Caco-2 (cell line): ENCODE measurements at regions of chr2 and their contacts with region 1.

Region 1: DNA sequence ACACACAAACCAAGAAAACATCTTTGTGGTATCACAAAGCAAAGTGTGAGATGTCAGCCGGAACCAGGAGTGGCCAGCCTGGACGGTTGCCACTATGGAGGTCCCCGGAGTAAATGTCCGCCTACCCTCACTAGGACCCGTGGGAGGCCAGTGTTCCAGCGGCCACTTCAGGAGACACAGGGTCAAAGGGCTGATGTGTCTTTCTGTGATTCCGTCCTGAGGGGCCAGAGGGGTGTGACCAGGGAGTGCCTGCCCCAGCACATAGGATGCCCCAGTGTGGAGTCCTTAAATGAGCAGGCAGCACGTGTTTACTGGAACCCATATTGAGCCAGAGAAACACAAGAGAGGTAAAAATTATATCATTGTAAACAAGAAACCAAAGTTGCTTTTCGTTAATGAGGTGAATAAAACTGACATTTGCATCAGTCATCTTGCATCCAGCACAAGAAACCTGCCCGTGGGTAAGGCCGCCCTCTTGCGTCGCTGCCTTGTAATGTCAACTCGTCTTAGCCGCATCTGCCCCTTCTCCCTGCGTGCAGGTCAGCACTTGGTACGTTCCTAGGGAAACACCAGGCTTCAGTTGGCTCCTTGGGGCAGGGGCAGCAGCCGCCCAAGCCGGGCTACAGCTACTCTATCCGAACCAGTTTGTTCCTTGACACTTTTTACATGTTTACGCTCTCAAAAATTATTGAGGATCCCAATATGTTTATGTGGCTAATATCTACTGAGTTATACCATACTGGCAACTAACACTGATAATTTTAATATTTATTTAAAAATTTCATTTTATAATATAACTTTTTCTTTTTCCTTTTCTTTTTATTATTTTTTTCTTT is 46.7 kb upstream of the LAPTM4A start:
- DNase-seq: peak; percentile 89
- H3K4me3 ChIP-seq: no peak overlapping the region
- H3K4me3 Mint-ChIP-seq: no peak overlapping the region
- H3K27ac Mint-ChIP-seq: no peak overlapping the region
- H3K4me1 ChIP-seq: peaks cover 5% of the 10 kb centered on the region
- H3K4me1 Mint-ChIP-seq: peaks cover 8% of the 10 kb centered on the region
- H3K27me3 ChIP-seq: no peaks in the 10 kb centered on the region
- H3K27me3 Mint-ChIP-seq: no peaks in the 10 kb centered on the region
- CTCF ChIP-seq: peak; percentile 93

Region 2: DNA sequence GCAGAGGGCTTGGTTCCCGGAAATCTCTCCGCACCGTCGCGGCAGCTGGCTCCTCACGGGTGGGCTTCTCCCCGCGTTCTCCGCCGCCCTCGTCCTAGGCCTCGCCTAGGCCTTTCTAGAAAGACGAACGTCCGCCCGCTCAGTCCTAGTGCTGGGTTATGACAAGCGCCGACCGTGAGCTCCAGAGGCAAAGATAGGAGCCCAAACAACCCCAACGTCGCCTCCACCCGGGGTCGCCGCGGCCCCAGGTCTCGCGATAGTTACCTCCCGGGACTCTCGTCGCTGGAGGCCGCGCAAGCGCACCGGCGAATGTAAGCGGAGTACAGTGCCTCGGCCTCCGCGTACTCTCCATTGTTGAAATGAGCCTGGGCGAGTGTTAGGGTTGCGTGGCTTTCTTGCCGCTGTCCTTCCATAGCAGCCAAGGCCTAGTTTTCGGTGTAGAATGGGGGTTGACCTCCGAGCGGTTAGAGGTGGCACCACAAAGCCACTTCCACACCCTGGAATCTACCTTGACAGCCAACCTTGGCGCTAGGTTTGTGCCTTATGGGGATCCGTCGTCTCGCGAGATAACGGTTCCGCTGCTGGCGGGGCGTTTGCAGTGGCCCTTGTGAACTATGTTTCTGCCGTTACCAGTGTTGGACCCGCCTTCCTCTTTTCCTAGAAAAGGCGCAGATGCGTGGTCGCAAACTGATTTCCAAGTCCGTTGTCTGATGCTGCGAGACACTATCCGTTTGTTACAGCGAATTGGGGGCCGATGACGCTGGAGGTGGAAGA is 196.5 kb before region 1 on chr2 and contains the start of gene TTC32:
- CTCF ChIA-PET with region 1: no interaction called
- POLR2A ChIA-PET with region 1: no interaction called
- intact Hi-C with region 1: loop called (anchors 2 kb)
- DNase-seq: peak; percentile 95 to 96
- H3K4me3 ChIP-seq: peak within 1 kb of the TSS; percentile 61
- H3K4me3 Mint-ChIP-seq: peak within 1 kb of the TSS; percentile 81
- H3K27ac Mint-ChIP-seq: peak within 1 kb of the TSS; percentile 96
- H3K4me1 ChIP-seq: no peaks in the 10 kb centered on the region
- H3K4me1 Mint-ChIP-seq: peaks cover 12% of the 10 kb centered on the region
- H3K27me3 ChIP-seq: no peaks in the 10 kb centered on the region
- H3K27me3 Mint-ChIP-seq: no peaks in the 10 kb centered on the region
- CTCF ChIP-seq: peak in 1 of 2 experiments; percentile 26
- total RNA-seq, gene TTC32: 15.5 and 16.8 TPM in 2 replicates

Region 3: DNA sequence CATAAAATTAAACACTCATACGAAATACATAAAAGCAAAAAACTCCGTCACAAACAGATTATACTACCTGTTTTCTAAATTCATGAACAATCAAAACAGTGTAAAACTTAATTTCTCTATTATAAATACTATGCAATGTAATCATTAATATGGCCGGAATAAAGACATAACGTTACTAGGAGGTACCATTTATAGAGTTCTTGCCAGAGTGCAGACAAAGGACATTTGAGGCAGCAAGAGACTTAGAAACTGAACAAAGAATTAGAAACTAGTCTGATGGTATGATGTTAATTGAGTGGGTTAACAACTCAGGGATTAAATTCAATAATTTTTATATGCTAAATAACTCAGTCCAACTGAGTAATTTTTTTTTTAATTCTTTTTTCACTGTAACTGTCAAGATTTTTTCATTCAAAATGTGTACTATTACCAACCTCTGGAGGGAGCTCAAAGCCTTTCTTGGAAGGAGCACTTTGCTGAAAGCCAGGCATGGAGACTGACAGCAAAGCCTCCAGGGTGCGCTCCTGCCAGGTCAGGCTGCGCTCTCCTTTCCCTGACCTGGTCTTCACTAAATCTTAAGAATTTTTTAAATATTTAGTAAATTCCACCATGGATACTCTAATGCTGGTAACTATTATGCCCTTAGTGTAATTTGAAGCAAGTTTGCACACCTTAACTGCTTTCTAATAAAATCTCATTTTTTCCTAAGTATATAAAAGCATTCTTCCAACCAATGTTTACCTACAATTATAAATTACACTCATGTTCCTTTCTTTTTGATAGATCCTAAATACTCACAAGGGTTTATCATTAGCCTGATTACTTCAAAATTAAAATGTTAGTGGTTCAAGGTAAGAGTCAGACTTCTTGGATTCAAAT is 142.3 kb before region 1 on chr2:
- CTCF ChIA-PET with region 1: interaction called, 10 read pairs
- POLR2A ChIA-PET with region 1: interaction called, 4 read pairs
- intact Hi-C with region 1: loop called (anchors 1 kb)
- DNase-seq: peak; percentile 78 to 82
- H3K4me3 ChIP-seq: no peak overlapping the region
- H3K4me3 Mint-ChIP-seq: no peak overlapping the region
- H3K27ac Mint-ChIP-seq: no peak overlapping the region
- H3K4me1 ChIP-seq: no peaks in the 10 kb centered on the region
- H3K4me1 Mint-ChIP-seq: no peaks in the 10 kb centered on the region
- H3K27me3 ChIP-seq: no peaks in the 10 kb centered on the region
- H3K27me3 Mint-ChIP-seq: no peaks in the 10 kb centered on the region
- CTCF ChIP-seq: peak; percentile 88 to 95

Region 4: DNA sequence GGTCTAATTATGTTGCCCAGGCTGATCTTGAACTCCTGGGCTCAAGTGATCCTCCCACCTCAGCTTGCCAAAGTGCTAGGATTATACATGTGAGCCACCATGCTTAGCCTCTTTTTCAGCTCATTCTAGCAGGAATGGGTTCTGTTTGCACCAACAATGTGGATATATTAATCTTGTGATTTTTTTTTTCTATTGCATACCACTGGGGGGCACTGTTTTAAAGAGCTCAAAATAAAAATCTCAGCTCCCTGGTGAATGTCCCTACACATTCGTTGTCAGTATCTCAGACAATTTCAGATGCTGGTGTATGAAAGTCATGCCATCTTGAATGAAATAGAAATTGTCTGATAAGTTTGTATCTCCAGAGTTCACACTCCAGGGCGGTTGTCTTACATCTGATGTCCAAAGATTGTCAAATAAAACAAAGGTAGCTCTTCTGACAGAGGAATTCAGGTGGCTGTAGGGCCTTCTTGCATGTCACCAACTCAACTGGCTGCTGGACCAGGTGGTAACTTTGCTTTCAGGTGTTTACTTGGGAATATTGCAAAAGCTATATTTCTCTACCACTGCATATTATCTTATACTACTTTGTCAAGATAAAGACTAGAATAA is 82.5 kb before region 1 on chr2:
- CTCF ChIA-PET with region 1: interaction called, 55 read pairs
- POLR2A ChIA-PET with region 1: no interaction called
- intact Hi-C with region 1: loop called (anchors 1 kb)
- DNase-seq: peak in 1 of 2 experiments; percentile 64
- H3K4me3 ChIP-seq: no peak overlapping the region
- H3K4me3 Mint-ChIP-seq: no peak overlapping the region
- H3K27ac Mint-ChIP-seq: no peak overlapping the region
- H3K4me1 ChIP-seq: peaks cover 17% of the 10 kb centered on the region
- H3K4me1 Mint-ChIP-seq: peaks cover 20% of the 10 kb centered on the region
- H3K27me3 ChIP-seq: no peaks in the 10 kb centered on the region
- H3K27me3 Mint-ChIP-seq: no peaks in the 10 kb centered on the region
- CTCF ChIP-seq: peak; percentile 54 to 61

Region 5: GRCh38 chr2:20071397-20072383 is 26.4 kb before region 1 on chr2:
- CTCF ChIA-PET with region 1: no interaction called
- POLR2A ChIA-PET with region 1: no interaction called
- intact Hi-C with region 1: loop called (anchors 1 kb)
- DNase-seq: peak; percentile 60 to 71
- H3K4me3 ChIP-seq: no peak overlapping the region
- H3K4me3 Mint-ChIP-seq: peak overlapping the region; percentile 8
- H3K27ac Mint-ChIP-seq: peak overlapping the region; percentile 16
- H3K4me1 ChIP-seq: peaks cover 16% of the 10 kb centered on the region
- H3K4me1 Mint-ChIP-seq: peaks cover 16% of the 10 kb centered on the region
- H3K27me3 ChIP-seq: no peaks in the 10 kb centered on the region
- H3K27me3 Mint-ChIP-seq: no peaks in the 10 kb centered on the region
- CTCF ChIP-seq: no peak

Region 6: DNA sequence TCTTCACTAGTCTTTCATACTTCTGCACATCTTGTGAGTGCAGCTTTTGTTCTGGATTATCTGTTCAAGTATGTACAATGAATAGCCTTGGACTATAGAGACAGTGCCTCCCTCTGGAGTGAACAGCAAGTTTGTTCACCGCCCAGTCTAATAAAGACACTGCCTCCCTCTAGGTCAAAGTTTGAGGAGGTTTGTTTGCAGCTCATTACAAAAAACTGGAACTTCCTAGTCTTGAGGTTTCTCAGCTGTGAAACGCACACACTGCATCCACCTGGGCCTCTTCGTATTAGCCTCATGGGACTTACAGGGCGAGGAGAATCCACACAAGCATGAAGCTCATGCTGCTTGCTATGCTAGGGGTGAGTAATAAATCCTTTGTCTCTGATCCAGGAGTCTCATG is 20.6 kb before region 1 on chr2:
- CTCF ChIA-PET with region 1: no interaction called
- POLR2A ChIA-PET with region 1: no interaction called
- intact Hi-C with region 1: loop called (anchors 1 kb)
- DNase-seq: peak in 1 of 2 experiments; percentile 31
- H3K4me3 ChIP-seq: no peak overlapping the region
- H3K4me3 Mint-ChIP-seq: no peak overlapping the region
- H3K27ac Mint-ChIP-seq: no peak overlapping the region
- H3K4me1 ChIP-seq: peaks cover 9% of the 10 kb centered on the region
- H3K4me1 Mint-ChIP-seq: peaks cover 8% of the 10 kb centered on the region
- H3K27me3 ChIP-seq: no peaks in the 10 kb centered on the region
- H3K27me3 Mint-ChIP-seq: no peaks in the 10 kb centered on the region
- CTCF ChIP-seq: peak in 1 of 2 experiments; percentile 39